Endothelial cell of umbilical vein (primary cell): ENCODE measurements at regions of chr11 and their contacts with region 1.

Region 1: GRCh38 chr11:43852057-43852636 is 28.5 kb upstream of the ALKBH3 start:
- DNase-seq: peak; percentile 78
- H3K4me3 ChIP-seq: no peak overlapping the region
- H3K27ac ChIP-seq: no peak overlapping the region
- H3K4me1 ChIP-seq: no peaks in the 10 kb centered on the region
- H3K27me3 ChIP-seq: no peaks in the 10 kb centered on the region
- CTCF ChIP-seq: peak; percentile 59 to 73
- POLR2A ChIP-seq: no peak

Region 2: GRCh38 chr11:43419460-43419859 is 432.7 kb before region 1 on chr11:
- CTCF ChIA-PET with region 1: interaction called, 19 read pairs
- POLR2A ChIA-PET with region 1: no interaction called
- dilution Hi-C with region 1: no loop called
- intact Hi-C with region 1: loop called (anchors 5 kb)
- DNase-seq: peak; percentile 59
- H3K4me3 ChIP-seq: no peak overlapping the region
- H3K27ac ChIP-seq: no peak overlapping the region
- H3K4me1 ChIP-seq: no peaks in the 10 kb centered on the region
- H3K27me3 ChIP-seq: no peaks in the 10 kb centered on the region
- CTCF ChIP-seq: peak; percentile 37 to 47
- POLR2A ChIP-seq: no peak

Region 3: DNA sequence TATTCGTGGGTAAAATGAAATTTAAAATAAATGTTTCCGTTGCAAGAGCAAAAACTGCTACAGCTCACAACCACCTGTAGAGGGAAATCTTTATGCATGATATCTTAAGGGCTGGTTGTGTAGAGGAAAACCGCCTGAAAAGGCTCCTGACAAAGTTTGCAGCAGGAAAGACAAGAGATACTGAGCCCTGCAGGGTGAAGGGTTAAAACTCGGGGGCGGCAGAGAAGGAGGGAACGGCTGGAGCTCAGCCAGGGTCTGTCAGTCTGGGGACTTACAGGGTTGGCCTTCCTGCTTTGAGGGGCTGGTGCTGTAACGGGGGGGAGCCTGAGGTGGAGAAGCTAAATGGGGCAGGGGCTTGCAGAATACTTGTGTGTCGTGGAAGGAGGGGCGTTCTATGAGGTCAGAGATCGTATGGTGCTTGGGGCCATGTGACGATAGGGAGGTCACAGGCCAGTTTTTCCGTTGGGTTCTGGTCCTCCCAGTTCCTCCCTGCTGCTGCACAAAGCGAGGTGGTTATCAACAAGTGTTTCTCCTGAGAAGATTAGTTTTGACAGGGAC is 294.5 kb before region 1 on chr11:
- CTCF ChIA-PET with region 1: interaction called, 11 read pairs
- POLR2A ChIA-PET with region 1: no interaction called
- dilution Hi-C with region 1: no loop called
- intact Hi-C with region 1: no loop called
- DNase-seq: no peak
- H3K4me3 ChIP-seq: no peak overlapping the region
- H3K27ac ChIP-seq: no peak overlapping the region
- H3K4me1 ChIP-seq: no peaks in the 10 kb centered on the region
- H3K27me3 ChIP-seq: peaks cover 39 to 62% of the 10 kb centered on the region in 2 experiments
- CTCF ChIP-seq: no peak
- POLR2A ChIP-seq: no peak

Region 4: GRCh38 chr11:43579171-43579918 is 272.8 kb before region 1 on chr11:
- CTCF ChIA-PET with region 1: interaction called, 11 read pairs
- POLR2A ChIA-PET with region 1: no interaction called
- dilution Hi-C with region 1: no loop called
- intact Hi-C with region 1: loop called (anchors 2 kb)
- DNase-seq: peak; percentile 51
- H3K4me3 ChIP-seq: peak overlapping the region; percentile 27 to 48 (median 43)
- H3K27ac ChIP-seq: no peak overlapping the region
- H3K4me1 ChIP-seq: peaks cover 5% of the 10 kb centered on the region
- H3K27me3 ChIP-seq: peaks cover 86 to 91% of the 10 kb centered on the region in 2 experiments
- CTCF ChIP-seq: peak in 1 of 2 donors; percentile 59
- POLR2A ChIP-seq: no peak

Region 5: DNA sequence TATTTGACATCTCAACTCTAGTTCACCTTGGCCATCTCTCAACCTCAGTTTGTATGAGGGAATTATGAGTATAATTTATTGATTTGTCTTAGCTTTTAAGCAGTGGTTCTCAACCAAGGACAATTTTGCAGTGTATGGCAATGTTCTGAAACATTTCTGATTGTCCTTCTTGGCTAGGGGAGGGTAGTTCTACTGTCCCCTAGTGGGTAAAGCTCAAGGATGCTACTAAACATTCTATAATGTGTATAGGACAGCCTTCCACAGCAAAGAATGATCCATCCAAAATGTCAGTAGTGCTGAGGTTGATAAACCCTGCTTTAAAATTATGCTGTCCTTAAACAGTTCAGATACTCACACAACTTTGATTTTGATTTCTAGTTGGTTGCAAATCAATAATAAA is 49.6 kb before region 1 on chr11:
- CTCF ChIA-PET with region 1: interaction called, 15 read pairs
- POLR2A ChIA-PET with region 1: no interaction called
- dilution Hi-C with region 1: no loop called
- intact Hi-C with region 1: no loop called
- DNase-seq: peak; percentile 12
- H3K4me3 ChIP-seq: no peak overlapping the region
- H3K27ac ChIP-seq: no peak overlapping the region
- H3K4me1 ChIP-seq: no peaks in the 10 kb centered on the region
- H3K27me3 ChIP-seq: no peaks in the 10 kb centered on the region
- CTCF ChIP-seq: peak; percentile 9 to 40
- POLR2A ChIP-seq: no peak

Region 6: GRCh38 chr11:43837879-43838278 is 14.3 kb before region 1 on chr11:
- CTCF ChIA-PET with region 1: interaction called, 55 read pairs
- POLR2A ChIA-PET with region 1: no interaction called
- dilution Hi-C with region 1: no loop called
- intact Hi-C with region 1: no loop called
- DNase-seq: no peak
- H3K4me3 ChIP-seq: no peak overlapping the region
- H3K27ac ChIP-seq: no peak overlapping the region
- H3K4me1 ChIP-seq: no peaks in the 10 kb centered on the region
- H3K27me3 ChIP-seq: no peaks in the 10 kb centered on the region
- CTCF ChIP-seq: no peak
- POLR2A ChIP-seq: no peak

Region 7: DNA sequence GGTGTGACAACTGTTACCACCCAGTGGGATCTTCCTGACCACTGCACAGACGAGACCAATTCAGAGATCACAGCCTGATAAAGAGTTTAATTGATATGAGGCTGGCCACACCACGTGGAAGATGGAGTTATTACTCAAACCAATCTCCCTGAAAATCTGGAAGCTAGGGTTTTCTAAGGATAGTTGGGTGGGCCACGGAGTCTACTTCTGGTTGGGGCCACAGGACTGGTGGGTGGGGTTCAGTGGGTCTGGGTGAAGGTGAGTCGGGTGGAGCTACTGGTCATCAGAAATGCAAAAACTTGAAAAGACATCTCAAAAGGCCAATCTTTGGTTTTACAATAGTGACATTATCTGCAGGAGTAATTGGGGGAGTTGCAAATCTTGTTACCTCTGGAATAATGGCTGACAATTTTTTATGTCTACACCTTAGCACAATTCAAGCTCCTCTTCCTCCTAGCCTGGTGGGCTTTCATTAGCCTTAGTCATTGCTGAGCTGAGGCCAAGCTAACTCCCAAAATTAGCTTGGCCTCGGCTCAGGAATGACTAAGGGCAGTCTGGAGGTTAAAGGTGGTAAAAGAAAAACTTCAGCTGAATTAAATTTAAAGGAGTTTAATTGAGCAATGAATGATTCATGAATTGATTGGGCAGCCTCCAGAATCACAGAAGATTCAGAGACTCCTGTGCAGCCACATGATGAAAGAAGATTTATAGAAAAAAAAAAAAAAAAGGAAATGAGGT is 103.4 kb after region 1 on chr11:
- CTCF ChIA-PET with region 1: no interaction called
- POLR2A ChIA-PET with region 1: no interaction called
- dilution Hi-C with region 1: no loop called
- intact Hi-C with region 1: no loop called
- DNase-seq: no peak
- H3K4me3 ChIP-seq: no peak overlapping the region
- H3K27ac ChIP-seq: no peak overlapping the region
- H3K4me1 ChIP-seq: no peaks in the 10 kb centered on the region
- H3K27me3 ChIP-seq: peaks cover 6 to 7% of the 10 kb centered on the region in 2 experiments
- CTCF ChIP-seq: no peak
- POLR2A ChIP-seq: no peak